HepG2 (cell line): ENCODE measurements at regions of chr6 and their contacts with region 1.

Region 1: DNA sequence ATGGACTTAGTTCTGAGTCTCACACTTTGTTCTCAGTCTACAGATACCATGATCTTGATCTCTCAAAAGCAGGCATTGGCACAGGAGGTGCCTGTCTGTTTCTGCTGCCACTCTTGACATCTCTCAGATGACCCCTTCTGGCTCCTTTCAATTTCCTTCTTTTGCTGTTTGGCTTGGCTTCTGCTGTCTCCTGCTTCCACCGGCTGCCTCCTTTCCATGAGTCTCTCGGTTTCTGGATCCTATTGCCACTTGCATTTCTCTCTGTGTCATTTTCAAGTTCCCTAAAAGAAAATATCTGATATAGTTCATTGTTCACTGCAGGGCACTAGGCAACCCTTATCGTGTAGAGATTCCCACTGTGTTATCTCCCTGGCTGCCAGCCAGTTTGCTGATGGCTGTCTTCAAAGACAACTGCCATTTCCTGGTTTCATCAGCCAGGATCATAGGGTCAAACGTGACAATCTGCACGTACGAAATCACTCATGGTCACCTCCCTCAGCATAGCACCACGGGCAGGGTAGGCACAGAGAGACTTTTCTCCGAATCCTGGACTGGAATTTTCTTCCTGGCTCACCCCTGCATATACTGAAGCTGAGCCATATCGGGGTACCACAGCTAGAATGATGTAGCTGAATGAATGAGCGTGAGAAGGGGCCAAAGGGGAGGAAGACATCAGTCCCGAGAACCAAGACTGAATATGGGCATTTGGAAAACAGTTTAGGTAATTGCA is 144.6 kb upstream of the TMEM170B start:
- DNase-seq: peak; percentile 100
- ATAC-seq: peak; percentile 85
- H3K4me3 ChIP-seq: peak overlapping the region in 1 of 3 experiments; percentile 39; a peak in 2 of 6 replicates
- H3K27ac ChIP-seq: peak overlapping the region; percentile 98
- H3K4me1 ChIP-seq: peaks cover 97% of the 10 kb centered on the region
- H3K27me3 ChIP-seq: no peaks in the 10 kb centered on the region
- CTCF ChIP-seq: peak; percentile 17; the same call in 1 of the 2 replicates
- EP300 ChIP-seq: peak; percentile 89 to 100
- POLR2A ChIP-seq: peak; percentile 63 to 66; a peak in 3 of 4 replicates
- RAD21 ChIP-seq: no peak

Region 2: DNA sequence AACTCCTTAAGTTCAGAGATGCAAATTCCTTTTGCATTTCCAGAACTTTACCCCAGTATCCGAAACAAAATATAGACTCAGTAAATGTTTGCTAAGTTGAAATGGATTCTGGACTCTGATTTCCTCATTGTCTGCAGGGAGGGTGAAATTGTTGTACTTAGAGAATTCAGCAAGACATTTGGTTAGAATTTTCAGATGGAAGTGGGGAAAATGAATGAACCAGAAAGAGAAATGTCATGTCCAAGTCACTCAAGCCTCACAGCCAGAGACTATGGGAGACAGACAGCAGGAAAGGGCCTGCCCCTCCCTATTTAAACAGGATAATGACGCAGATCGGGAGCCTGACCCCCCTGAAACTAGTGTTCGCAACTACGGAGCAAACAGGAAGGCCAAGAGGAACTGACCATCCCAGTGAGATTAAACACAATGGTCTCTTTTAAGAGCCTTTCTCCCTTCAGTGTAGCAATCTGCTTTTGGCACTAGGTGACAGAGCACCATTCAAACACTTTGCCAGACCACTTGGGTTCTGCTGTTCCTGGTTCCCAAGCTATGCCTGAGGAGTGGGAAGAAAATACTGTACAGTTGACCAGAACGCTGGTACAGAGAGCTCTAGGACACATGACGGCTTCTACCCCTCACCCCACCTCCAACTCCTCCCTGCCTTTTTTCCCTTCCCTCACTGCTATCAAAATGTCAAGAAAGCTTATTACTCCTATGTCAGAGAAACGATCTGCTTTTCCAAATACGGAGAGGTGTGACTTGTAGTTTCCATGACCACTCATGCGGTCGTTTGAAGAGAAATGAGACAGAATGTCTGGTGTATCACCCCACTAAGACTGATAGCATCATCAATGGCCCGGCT is 174.2 kb before region 1 on chr6:
- CTCF ChIA-PET with region 1: no interaction called
- POLR2A ChIA-PET with region 1: no interaction called
- in situ Hi-C with region 1: no loop called
- intact Hi-C with region 1: loop called (anchors 5 kb)
- DNase-seq: peak; percentile 99
- ATAC-seq: peak; percentile 91
- H3K4me3 ChIP-seq: peak overlapping the region; percentile 13 to 54 (median 21)
- H3K27ac ChIP-seq: peak overlapping the region; percentile 85
- H3K4me1 ChIP-seq: peaks cover 100% of the 10 kb centered on the region
- H3K27me3 ChIP-seq: no peaks in the 10 kb centered on the region
- CTCF ChIP-seq: peak; percentile 46
- EP300 ChIP-seq: peak; percentile 86 to 89; a peak in 3 of 4 replicates
- POLR2A ChIP-seq: peak in 1 of 2 experiments; percentile 77; a peak in 3 of 4 replicates
- RAD21 ChIP-seq: peak; percentile 76

Region 3: GRCh38 chr6:11309947-11310665 is 82.8 kb before region 1 on chr6:
- CTCF ChIA-PET with region 1: no interaction called
- POLR2A ChIA-PET with region 1: no interaction called
- in situ Hi-C with region 1: no loop called
- intact Hi-C with region 1: no loop called
- DNase-seq: no peak
- ATAC-seq: peak; percentile 91
- H3K4me3 ChIP-seq: no peak overlapping the region
- H3K27ac ChIP-seq: no peak overlapping the region
- H3K4me1 ChIP-seq: no peaks in the 10 kb centered on the region; the same call in 1 of the 2 replicates
- H3K27me3 ChIP-seq: no peaks in the 10 kb centered on the region
- CTCF ChIP-seq: no peak
- EP300 ChIP-seq: no peak
- POLR2A ChIP-seq: no peak
- RAD21 ChIP-seq: 0 out of 2 replicates have a peak, but pooled peaks have one; percentile 32

Region 4: DNA sequence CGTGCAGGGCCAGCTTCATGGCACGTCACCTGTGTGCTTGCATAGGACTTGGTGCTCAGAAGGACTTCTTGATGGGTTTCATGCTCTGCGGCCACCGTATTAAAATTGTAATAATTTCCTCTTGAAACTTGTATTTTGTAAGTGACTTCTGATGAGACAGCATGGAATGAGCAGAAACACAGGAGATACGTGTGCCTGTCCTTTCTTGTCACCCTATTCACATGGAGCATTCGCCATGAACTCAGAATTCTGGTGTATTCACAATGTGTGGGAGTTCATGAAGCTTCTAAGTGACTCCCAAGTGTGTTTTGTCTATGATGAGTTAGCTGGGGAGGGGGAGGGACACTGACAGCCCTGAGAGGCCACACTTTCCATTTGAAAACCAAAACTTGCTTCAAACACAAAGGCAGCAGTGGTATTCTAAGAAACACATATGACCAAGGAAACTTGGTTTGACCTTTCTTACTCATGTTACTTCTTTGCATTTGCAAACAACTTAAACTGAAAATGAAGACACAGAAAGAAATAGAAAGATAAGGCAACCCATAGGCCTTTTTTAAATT is 68.4 kb before region 1 on chr6:
- CTCF ChIA-PET with region 1: no interaction called
- POLR2A ChIA-PET with region 1: no interaction called
- in situ Hi-C with region 1: no loop called
- intact Hi-C with region 1: loop called (anchors 2 kb)
- DNase-seq: no peak
- ATAC-seq: no peak
- H3K4me3 ChIP-seq: no peak overlapping the region
- H3K27ac ChIP-seq: peak overlapping the region; percentile 37
- H3K4me1 ChIP-seq: peaks cover 52% of the 10 kb centered on the region
- H3K27me3 ChIP-seq: no peaks in the 10 kb centered on the region
- CTCF ChIP-seq: no peak
- EP300 ChIP-seq: no peak
- POLR2A ChIP-seq: no peak
- RAD21 ChIP-seq: no peak

Region 5: DNA sequence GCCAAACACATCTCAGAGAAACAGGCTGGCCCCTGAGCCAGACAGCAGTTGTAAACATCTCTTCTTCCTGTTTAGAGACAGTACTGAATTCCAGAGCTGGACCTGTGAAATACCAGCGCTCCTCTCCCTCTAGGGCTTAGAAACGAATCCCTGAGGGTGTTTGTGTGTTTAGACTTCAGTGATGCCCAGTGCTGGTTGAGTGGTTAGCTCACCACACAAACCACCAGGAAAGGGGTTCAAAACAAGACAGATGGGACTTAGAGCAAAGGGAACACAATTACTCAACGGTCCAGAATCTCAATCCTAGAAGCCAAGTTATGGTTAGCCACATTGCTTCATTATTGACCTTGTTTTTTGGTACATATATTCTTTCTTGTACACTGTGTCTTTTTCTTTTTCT is 36.0 kb after region 1 on chr6:
- CTCF ChIA-PET with region 1: no interaction called
- POLR2A ChIA-PET with region 1: interaction called, 3 read pairs
- in situ Hi-C with region 1: no loop called
- intact Hi-C with region 1: loop called (anchors 2 kb)
- DNase-seq: peak; percentile 80
- ATAC-seq: peak; percentile 70
- H3K4me3 ChIP-seq: no peak overlapping the region; a peak in 1 of 6 replicates
- H3K27ac ChIP-seq: peak overlapping the region; percentile 71
- H3K4me1 ChIP-seq: peaks cover 100% of the 10 kb centered on the region
- H3K27me3 ChIP-seq: no peaks in the 10 kb centered on the region
- CTCF ChIP-seq: no peak
- EP300 ChIP-seq: peak in 1 of 2 experiments; percentile 72; a peak in 1 of 4 replicates
- POLR2A ChIP-seq: no peak
- RAD21 ChIP-seq: no peak